Activated naive CD4-positive, alpha-beta T cell treated with anti-CD3 and anti-CD28 coated beads, Interleukin-2, amount 10 ng/mL, durations not matched to agents 7 days and 5 days (primary cell): ENCODE measurements at regions of chr11 and their contacts with region 1.

Region 1: DNA sequence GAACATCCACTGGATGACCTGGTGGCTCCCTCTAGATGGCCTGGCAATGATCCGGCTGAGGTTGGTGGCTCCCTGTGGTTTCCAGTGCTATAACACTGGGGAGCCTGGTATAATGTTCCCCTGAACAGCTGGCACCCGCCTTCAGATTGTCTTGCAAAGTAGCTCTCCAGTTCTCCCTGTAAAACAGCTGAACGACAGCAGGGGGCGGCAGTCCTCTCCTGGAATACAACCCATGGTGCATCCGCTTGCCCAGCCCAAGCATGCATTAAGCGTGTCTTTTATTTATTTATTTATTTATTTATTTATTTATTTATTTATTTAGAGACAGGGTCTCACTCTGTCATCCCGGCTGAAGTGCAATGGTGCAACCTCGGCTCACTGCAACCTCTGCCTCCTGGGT is 258.9 kb downstream of the BUD13 start:
- DNase-seq: peak; percentile 51
- H3K4me3 Mint-ChIP-seq: no peak overlapping the region
- H3K27ac Mint-ChIP-seq: no peak overlapping the region
- H3K4me1 Mint-ChIP-seq: no peaks in the 10 kb centered on the region
- H3K27me3 Mint-ChIP-seq: peaks cover 12% of the 10 kb centered on the region

Region 2: GRCh38 chr11:116317212-116317611 is 196.7 kb before region 1 on chr11:
- CTCF ChIA-PET with region 1: no interaction called
- DNase-seq: no peak
- H3K4me3 Mint-ChIP-seq: no peak overlapping the region
- H3K27ac Mint-ChIP-seq: no peak overlapping the region
- H3K4me1 Mint-ChIP-seq: no peaks in the 10 kb centered on the region
- H3K27me3 Mint-ChIP-seq: no peaks in the 10 kb centered on the region

Region 3: DNA sequence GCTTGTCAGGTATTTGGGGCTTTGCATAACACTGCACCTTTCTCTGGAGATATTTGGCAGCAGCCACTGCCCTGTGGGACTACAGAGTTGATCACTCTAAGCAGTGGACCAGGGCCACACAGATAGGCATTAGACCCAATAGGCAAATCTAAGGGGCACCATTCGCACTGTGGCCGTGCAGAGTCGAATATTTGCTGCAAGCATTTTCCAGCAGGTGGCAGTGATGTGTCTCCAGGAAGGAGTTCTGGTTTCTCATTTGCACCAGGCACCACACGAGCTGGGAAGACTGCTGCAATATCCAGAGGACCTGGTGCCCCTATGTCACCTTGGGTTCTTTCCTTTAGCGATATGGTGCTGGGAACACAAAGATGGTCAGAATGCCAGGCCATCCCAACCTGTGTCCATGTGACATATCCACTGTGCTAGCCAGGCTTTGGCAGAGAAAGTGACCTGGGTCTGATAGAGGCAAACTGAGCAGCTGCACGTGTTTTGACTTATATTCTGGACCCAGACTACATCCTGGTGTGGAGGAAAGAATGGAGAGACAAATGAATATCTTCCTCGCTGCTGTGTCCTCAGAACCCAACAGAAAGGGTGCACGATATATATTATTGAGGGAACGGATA is 59.8 kb before region 1 on chr11:
- CTCF ChIA-PET with region 1: no interaction called
- DNase-seq: peak; percentile 35
- H3K4me3 Mint-ChIP-seq: no peak overlapping the region
- H3K27ac Mint-ChIP-seq: no peak overlapping the region
- H3K4me1 Mint-ChIP-seq: no peaks in the 10 kb centered on the region
- H3K27me3 Mint-ChIP-seq: peaks cover 6% of the 10 kb centered on the region

Region 4: DNA sequence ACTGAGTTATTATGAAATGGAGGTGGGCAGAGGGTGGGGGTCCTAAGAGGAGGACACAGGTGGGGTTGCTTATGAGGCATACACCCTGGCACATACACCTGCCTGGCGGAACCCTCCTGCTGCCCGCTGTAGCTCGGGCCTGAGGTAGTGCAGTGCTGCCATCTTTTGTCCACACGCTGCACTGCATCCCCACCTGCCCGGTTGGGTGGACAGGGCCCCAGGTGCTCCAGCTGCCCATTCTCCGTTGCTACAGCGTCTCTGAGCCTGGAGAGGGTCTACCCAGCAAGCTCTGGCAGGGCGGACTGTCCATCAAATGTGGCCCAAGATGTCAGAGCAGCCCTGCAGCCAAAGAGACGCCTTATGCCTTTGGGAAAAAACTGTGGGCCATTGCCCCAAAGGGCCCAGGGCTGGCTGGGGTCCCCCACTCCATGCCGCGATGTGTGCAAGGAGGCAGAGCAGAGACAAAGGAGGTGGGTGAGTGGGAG is 127.7 kb after region 1 on chr11:
- CTCF ChIA-PET with region 1: interaction called, 17 read pairs
- DNase-seq: peak; percentile 44
- H3K4me3 Mint-ChIP-seq: no peak overlapping the region
- H3K27ac Mint-ChIP-seq: no peak overlapping the region
- H3K4me1 Mint-ChIP-seq: no peaks in the 10 kb centered on the region
- H3K27me3 Mint-ChIP-seq: no peaks in the 10 kb centered on the region

Region 5: GRCh38 chr11:116691771-116692177 is 177.9 kb after region 1 on chr11:
- CTCF ChIA-PET with region 1: interaction called, 10 read pairs
- DNase-seq: peak; percentile 66
- H3K4me3 Mint-ChIP-seq: no peak overlapping the region
- H3K27ac Mint-ChIP-seq: no peak overlapping the region
- H3K4me1 Mint-ChIP-seq: no peaks in the 10 kb centered on the region
- H3K27me3 Mint-ChIP-seq: peaks cover 13% of the 10 kb centered on the region